Heart left ventricle (tissue), 16 donors: ENCODE measurements at regions of chr10 and their contacts with region 1.

Region 1: DNA sequence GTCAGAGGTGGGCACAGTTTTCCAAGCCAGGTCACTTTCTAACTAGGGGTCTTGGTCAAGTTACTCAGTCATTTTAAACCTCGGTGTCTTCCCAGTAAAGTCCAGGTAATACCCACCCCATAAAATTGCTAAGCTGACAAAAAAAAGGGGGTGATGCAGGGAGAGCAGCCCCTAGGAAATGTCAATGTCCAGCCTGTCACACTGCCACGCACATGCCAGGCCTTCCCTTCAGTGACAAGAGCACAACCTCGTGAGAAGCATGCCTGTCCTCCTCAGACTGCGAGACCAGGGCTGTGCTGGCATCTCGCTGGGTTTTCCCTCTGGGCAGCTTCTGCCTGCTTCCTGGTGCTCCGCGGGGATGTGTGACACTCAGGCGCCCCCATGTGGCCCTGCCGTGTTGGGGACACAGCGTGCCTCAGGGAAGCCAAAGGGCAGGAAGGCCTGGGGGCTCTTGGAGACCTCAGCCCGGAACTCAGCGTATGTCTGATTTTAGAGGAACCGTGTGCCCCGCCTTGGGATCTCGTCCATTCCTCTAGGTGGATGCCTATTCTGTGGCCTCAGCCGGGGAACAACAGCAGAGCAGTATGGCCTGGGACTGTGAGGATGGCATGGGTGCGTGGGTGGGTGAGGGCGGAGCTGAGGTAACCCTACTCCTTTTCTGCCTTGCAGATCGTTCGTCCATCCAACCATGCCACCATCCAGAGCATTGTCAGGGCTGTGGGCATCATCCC is 10.2 kb upstream of the GDF2 start:
- DNase-seq: peak; percentile 78 to 91 (median 83)
- ATAC-seq: peak; percentile 80 to 97 (median 94)
- H3K4me3 ChIP-seq: no peak overlapping the region
- H3K27ac ChIP-seq: no peak overlapping the region
- H3K4me1 ChIP-seq: peaks cover 0 to 10% (median 4%) of the 10 kb centered on the region in 12 donors
- H3K27me3 ChIP-seq: peaks cover 0 to 7% (median 0%) of the 10 kb centered on the region in 9 donors
- CTCF ChIP-seq: peak; percentile 63 to 91 (median 81)
- POLR2A ChIP-seq: no peak

Region 2: DNA sequence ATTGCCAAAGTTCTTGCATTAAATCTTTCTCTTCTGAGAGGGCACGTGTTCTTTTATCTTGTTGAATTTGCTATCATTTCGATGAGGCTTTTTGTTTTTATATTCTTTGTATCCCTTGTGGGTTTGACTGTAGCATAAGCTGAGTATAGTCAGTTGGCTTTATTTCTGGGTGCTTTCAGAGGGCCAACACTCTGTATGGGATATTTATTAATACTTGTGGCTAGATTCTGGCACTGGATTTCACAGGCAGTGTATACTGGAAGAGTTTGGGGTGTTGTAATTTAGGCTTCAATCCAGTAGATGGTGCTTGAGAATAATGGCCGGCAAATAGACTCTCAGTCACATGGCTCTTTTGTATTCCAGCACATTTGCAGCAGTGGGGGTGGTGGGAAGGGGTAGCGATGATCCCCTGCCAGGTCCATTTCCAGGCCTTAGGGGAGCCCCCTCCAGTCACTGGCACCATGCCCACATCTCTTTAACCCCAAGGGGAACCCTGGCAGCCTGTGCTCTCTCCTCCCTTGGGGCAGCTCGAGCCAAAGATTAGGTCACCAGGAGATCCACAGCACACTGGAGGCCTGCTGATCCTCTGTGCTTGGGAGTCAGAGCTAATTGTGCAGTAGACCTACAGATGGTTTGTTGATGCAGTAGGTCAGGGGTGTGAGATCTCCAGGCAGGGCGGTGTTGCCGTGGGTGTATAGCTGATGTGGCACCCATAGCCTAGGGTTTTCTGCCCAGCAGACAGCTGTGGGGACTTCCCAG is 319.1 kb before region 1 on chr10:
- intact Hi-C with region 1: loop called in 2 of 10 experiments (anchors 10 kb)
- DNase-seq: peak in 2 of 5 donors; percentile 27 to 48
- ATAC-seq: peak; percentile 58 to 91 (median 80)
- H3K4me3 ChIP-seq: no peak overlapping the region
- H3K27ac ChIP-seq: peak overlapping the region in 1 of 12 donors; percentile 13
- H3K4me1 ChIP-seq: peaks cover 0 to 11% (median 3%) of the 10 kb centered on the region in 12 donors
- H3K27me3 ChIP-seq: no peaks in the 10 kb centered on the region
- CTCF ChIP-seq: peak in 10 of 12 donors; percentile 23 to 53 (median 35)
- POLR2A ChIP-seq: no peak

Region 3: GRCh38 chr10:47024399-47025252 is 287.5 kb before region 1 on chr10:
- intact Hi-C with region 1: loop called in 9 of 10 experiments (anchors 1 to 10 kb)
- DNase-seq: peak in 3 of 5 donors; percentile 51 to 69 (median 52)
- ATAC-seq: peak; percentile 33 to 72 (median 70)
- H3K4me3 ChIP-seq: no peak overlapping the region
- H3K27ac ChIP-seq: peak overlapping the region in 2 of 12 donors; percentile 14 to 30
- H3K4me1 ChIP-seq: peaks cover 0 to 9% (median 0%) of the 10 kb centered on the region in 12 donors
- H3K27me3 ChIP-seq: no peaks in the 10 kb centered on the region
- CTCF ChIP-seq: peak; percentile 61 to 84 (median 72)
- POLR2A ChIP-seq: no peak

Region 4: GRCh38 chr10:47277352-47278151 is 34.5 kb before region 1 on chr10:
- intact Hi-C with region 1: no loop called
- DNase-seq: no peak
- ATAC-seq: peak in 2 of 4 donors; percentile 38 to 49
- H3K4me3 ChIP-seq: no peak overlapping the region
- H3K27ac ChIP-seq: no peak overlapping the region
- H3K4me1 ChIP-seq: peaks cover 0 to 11% (median 0%) of the 10 kb centered on the region in 12 donors
- H3K27me3 ChIP-seq: peaks cover 0 to 4% (median 0%) of the 10 kb centered on the region in 9 donors
- CTCF ChIP-seq: no peak
- POLR2A ChIP-seq: no peak